Prostate gland (tissue), 2 donors: ENCODE measurements at regions of chr9 and their contacts with region 1.

Region 1: GRCh38 chr9:35664531-35665470 is at the start of gene ARHGEF39:
- DNase-seq: peak; percentile 59
- H3K4me3 ChIP-seq: peak within 1 kb of the TSS; percentile 23 to 44
- H3K27ac ChIP-seq: peak within 1 kb of the TSS; percentile 43 to 70
- H3K4me1 ChIP-seq: no peaks in the 10 kb centered on the region
- H3K27me3 ChIP-seq: no peaks in the 10 kb centered on the region
- CTCF ChIP-seq: peak in 3 of 4 experiments; percentile 19 to 36 (median 22)
- POLR2A ChIP-seq: peak; percentile 60
- total RNA-seq, gene ARHGEF39: 1.1 to 1.8 TPM

Region 2: DNA sequence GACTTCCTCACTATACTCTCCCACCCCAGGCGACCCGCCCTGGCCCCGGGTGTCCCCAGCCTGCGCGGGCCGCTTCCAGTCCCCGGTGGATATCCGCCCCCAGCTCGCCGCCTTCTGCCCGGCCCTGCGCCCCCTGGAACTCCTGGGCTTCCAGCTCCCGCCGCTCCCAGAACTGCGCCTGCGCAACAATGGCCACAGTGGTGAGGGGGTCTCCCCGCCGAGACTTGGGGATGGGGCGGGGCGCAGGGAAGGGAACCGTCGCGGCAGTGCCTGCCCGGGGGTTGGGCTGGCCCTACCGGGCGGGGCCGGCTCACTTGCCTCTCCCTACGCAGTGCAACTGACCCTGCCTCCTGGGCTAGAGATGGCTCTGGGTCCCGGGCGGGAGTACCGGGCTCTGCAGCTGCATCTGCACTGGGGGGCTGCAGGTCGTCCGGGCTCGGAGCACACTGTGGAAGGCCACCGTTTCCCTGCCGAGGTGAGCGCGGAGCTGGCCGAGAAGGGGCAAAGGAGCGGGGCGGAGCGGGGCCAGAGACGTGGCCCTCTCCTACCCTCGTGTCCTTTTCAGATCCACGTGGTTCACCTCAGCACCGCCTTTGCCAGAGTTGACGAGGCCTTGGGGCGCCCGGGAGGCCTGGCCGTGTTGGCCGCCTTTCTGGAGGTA is 11.1 kb after region 1 on chr9:
- intact Hi-C with region 1: loop called (anchors 1 kb)
- DNase-seq: no peak
- H3K4me3 ChIP-seq: peak overlapping the region; percentile 36 to 40
- H3K27ac ChIP-seq: peak overlapping the region in 1 of 2 donors; percentile 33
- H3K4me1 ChIP-seq: no peaks in the 10 kb centered on the region
- H3K27me3 ChIP-seq: no peaks in the 10 kb centered on the region
- CTCF ChIP-seq: no peak
- POLR2A ChIP-seq: no peak

Region 3: DNA sequence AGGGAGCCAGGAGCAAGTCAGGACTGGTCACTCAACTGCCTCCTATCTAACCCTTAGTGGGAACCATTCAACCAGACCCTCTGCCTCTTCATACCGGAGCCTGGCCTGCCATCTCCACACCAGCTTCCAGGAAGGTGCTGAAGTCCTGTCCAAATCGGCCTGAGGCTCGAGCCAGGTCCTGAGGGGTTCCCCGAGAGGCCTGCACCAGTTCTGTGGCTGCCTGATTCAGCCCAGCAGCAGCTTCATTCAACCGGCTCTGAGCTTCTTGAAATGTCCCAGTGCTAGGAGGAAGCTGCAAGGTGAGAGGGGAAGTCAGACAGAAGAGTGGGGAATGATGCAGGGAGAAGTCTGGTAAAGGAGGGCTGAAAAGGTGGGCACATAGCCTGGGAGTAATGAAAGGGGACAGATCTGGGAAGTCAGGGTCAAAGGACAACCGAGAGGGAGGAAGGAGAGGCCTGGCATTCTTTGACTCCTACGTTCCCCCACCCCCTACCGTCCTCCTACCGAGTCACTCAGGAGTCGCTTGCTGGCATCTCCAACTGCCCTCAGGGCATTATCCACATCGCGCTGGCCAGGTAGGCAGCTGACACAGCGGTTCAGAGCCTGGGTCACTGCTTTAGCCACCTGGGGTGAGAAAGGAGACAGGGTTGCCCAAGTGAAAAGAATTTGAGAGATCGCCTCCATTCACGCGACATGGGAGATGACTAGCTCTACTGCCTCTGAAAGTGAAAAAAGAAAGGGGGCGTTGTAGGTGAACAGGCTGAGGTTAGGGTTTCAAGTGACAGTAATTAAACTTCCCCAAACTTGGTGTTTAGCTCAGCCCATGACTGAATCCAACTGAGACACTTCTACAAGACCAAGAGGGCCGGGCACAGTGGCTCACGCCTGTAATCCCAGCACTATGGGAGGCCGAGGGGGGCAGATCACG is 47.0 kb after region 1 on chr9:
- intact Hi-C with region 1: no loop called
- DNase-seq: no peak
- H3K4me3 ChIP-seq: no peak overlapping the region
- H3K27ac ChIP-seq: no peak overlapping the region
- H3K4me1 ChIP-seq: no peaks in the 10 kb centered on the region
- H3K27me3 ChIP-seq: no peaks in the 10 kb centered on the region
- CTCF ChIP-seq: no peak
- POLR2A ChIP-seq: no peak

Region 4: DNA sequence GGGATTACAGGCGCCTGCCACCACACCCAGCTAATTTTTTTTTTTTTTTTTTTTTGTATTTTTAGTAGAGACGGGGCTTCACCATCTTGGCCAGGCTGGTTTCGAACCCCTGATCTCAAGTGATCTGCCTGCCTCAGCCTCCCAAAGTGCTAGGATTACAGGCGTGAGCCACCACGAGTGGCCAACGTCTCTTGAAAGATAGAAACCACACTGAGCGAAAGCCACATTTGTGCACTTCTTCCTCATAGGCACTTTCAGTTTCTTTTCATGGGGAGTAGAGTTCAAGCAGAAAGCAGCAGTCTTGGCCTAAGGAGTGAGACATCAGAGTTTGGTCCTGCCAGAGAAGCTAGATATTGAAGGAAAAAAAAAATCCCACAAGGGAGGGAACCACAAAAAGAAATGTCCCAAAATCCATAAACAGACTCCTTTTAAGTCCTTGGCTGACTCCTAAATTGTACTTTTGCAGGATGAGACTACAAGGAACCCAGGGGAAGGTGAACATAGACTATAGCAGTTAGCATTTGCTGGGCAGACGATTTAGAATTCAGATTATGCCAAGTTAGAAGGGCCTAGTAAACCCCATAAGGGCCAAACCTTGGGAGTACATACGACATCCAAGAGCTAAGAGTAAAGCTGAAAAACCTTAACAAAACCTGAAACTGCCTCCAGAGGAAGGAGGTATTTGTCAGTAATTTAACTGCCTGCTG is 427.9 kb after region 1 on chr9:
- intact Hi-C with region 1: no loop called
- DNase-seq: no peak
- H3K4me3 ChIP-seq: no peak overlapping the region
- H3K27ac ChIP-seq: no peak overlapping the region
- H3K4me1 ChIP-seq: no peaks in the 10 kb centered on the region
- H3K27me3 ChIP-seq: no peaks in the 10 kb centered on the region
- CTCF ChIP-seq: no peak
- POLR2A ChIP-seq: no peak